Calu3 (cell line): ENCODE measurements at regions of chr12 and their contacts with region 1.

Region 1: DNA sequence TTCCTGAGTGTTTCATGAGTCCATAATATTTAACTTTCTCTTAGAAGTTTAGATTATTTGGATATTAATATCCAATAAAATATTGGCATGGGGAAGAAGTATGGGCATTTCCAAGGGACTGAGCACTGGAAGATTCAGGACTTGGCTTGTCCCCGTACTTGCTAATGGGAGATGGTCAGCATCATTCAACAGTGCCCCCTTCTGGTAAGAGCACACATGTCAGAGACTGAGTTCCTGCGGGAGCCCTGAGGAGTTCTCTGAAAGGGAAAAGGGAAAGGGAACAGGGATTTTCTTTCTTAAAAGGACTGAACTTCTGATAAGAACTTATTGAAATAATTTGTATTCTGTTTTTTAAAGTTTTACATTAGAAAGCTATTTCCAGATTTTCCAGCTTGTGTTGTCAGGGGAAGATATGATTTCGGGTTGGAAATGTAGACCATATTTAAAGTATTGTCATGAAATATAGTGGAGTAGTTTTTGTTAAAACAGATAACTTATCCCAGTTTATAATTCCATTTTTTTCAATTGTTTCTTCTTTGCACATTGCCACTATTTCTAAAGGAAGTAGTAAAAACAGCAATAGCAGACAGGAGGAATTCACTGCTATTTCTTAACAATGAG is 59.8 kb upstream of the C12orf71 start:
- DNase-seq: peak; percentile 74
- H3K4me3 Mint-ChIP-seq: no peak overlapping the region
- H3K27ac Mint-ChIP-seq: no peak overlapping the region
- H3K4me1 Mint-ChIP-seq: peaks cover 8% of the 10 kb centered on the region
- H3K27me3 Mint-ChIP-seq: no peaks in the 10 kb centered on the region
- CTCF ChIP-seq: peak; percentile 81

Region 2: GRCh38 chr12:27034607-27035293 is 107.5 kb before region 1 on chr12:
- CTCF ChIA-PET with region 1: no interaction called
- intact Hi-C with region 1: loop called (anchors 5 kb)
- DNase-seq: no peak
- H3K4me3 Mint-ChIP-seq: no peak overlapping the region
- H3K27ac Mint-ChIP-seq: no peak overlapping the region
- H3K4me1 Mint-ChIP-seq: no peaks in the 10 kb centered on the region
- H3K27me3 Mint-ChIP-seq: no peaks in the 10 kb centered on the region
- CTCF ChIP-seq: no peak

Region 3: DNA sequence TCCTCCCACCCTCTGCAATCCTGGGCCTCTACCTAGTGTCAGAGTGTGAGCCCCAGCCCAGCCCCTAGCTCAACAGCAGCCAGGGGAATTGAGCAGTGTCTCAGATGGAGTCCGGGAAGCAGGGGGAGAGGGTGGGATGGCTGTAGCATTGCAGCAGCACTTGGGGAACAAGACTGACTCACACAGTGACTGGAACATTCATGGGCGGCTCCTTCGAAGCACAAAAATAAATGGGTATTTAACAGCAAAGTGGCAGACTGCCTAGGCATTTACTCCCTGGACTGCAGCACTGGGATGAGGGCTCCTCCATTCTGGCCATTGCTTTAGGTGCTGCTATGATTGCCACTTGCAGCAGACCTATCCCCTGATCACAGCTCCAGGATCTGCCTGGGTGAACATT is 55.8 kb after region 1 on chr12:
- CTCF ChIA-PET with region 1: no interaction called
- intact Hi-C with region 1: no loop called
- DNase-seq: no peak
- H3K4me3 Mint-ChIP-seq: no peak overlapping the region
- H3K27ac Mint-ChIP-seq: no peak overlapping the region
- H3K4me1 Mint-ChIP-seq: no peaks in the 10 kb centered on the region
- H3K27me3 Mint-ChIP-seq: no peaks in the 10 kb centered on the region
- CTCF ChIP-seq: no peak

Region 4: GRCh38 chr12:27243804-27244683 is 101.8 kb after region 1 on chr12 and contains the start of gene STK38L:
- CTCF ChIA-PET with region 1: no interaction called
- intact Hi-C with region 1: loop called (anchors 10 kb)
- DNase-seq: peak; percentile 99
- H3K4me3 Mint-ChIP-seq: peak within 1 kb of the TSS; percentile 95
- H3K27ac Mint-ChIP-seq: peak within 1 kb of the TSS; percentile 84
- H3K4me1 Mint-ChIP-seq: peaks cover 16% of the 10 kb centered on the region
- H3K27me3 Mint-ChIP-seq: no peaks in the 10 kb centered on the region
- CTCF ChIP-seq: no peak
- total RNA-seq, gene STK38L: 24.6 and 30.3 TPM in 2 replicates

Region 5: GRCh38 chr12:27305673-27306456 is 163.7 kb after region 1 on chr12:
- CTCF ChIA-PET with region 1: no interaction called
- intact Hi-C with region 1: loop called (anchors 10 kb)
- DNase-seq: no peak
- H3K4me3 Mint-ChIP-seq: no peak overlapping the region
- H3K27ac Mint-ChIP-seq: no peak overlapping the region
- H3K4me1 Mint-ChIP-seq: peaks cover 9% of the 10 kb centered on the region
- H3K27me3 Mint-ChIP-seq: no peaks in the 10 kb centered on the region
- CTCF ChIP-seq: peak; percentile 35